Thyroid gland (tissue), 4 donors: ENCODE measurements at regions of chr10 and their contacts with region 1.

Region 1: DNA sequence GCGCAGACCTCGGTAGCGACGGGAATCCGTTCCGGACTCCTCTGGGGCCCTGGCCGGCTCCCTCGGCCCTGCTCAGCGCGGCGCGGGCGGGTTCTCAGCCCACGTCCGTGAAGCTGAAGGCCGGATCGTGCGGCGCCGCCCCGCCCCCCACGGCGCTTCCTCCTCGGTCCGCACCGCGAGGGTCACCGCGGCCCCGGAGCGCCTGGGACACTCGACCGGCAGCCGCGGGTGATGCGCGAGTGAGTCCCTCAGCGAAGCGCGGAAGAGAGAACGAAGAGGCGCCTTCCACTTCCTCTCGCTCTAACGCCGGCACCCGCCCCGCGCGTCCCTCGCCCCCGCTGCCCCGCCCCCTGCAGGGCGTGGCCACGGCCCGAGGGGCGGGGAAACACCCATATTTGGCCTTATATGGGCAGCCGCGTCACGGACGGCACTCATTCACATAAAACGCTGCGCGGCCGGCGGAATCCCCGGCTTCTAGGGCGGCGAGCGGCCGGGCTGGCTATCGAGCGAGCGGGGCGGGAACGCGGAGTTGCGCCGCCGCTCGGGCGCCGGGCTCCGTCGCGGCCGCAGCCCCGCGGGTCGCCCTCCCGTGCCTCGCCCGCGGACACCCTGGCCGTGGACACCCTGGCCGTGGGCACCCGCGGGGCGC is at the start of gene DUSP5:
- DNase-seq: peak; percentile 90 to 94
- H3K4me3 ChIP-seq: peak within 1 kb of the TSS; percentile 79 to 91 (median 85)
- H3K27ac ChIP-seq: peak within 1 kb of the TSS; percentile 76 to 84 (median 84)
- H3K4me1 ChIP-seq: peaks cover 22 to 35% of the 10 kb centered on the region in 2 donors
- H3K27me3 ChIP-seq: no peaks in the 10 kb centered on the region
- CTCF ChIP-seq: peak in 1 of 6 experiments; percentile 3
- POLR2A ChIP-seq: peak; percentile 88 to 99
- total RNA-seq, gene DUSP5: 2.1 to 14.2 (median 7.1) TPM

Region 2: DNA sequence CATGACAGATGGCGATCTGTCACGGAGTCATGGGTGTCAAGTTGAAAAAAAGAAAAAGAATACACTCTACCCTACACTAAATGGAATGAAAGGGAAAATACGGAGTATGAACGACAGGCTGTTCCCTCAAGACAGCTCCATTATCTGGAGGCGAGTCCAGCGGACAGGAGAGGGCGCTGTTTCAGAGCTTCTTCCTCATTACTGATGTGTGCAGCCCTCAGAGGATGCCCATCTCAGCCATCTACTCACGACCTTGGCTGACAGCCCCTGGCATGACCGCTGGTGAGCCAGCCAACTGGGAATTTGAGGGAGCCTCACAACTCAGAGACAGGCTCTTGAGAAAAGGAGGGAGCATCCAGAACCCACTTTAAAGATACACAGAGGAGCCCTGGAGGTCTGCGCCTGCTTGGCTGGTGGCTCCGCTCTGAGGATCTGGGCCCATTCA is 143.2 kb before region 1 on chr10:
- intact Hi-C with region 1: loop called (anchors 5 kb)
- DNase-seq: peak; percentile 82 to 87
- H3K4me3 ChIP-seq: no peak overlapping the region
- H3K27ac ChIP-seq: no peak overlapping the region
- H3K4me1 ChIP-seq: peaks cover 10 to 41% of the 10 kb centered on the region in 2 donors
- H3K27me3 ChIP-seq: no peaks in the 10 kb centered on the region
- CTCF ChIP-seq: peak; percentile 39 to 69 (median 52)
- POLR2A ChIP-seq: no peak

Region 3: GRCh38 chr10:110746254-110746826 is 248.8 kb after region 1 on chr10:
- intact Hi-C with region 1: no loop called
- DNase-seq: peak; percentile 72 to 75
- H3K4me3 ChIP-seq: no peak overlapping the region
- H3K27ac ChIP-seq: no peak overlapping the region
- H3K4me1 ChIP-seq: peaks cover 0 to 12% of the 10 kb centered on the region in 2 donors
- H3K27me3 ChIP-seq: no peaks in the 10 kb centered on the region
- CTCF ChIP-seq: peak; percentile 63 to 88 (median 77)
- POLR2A ChIP-seq: no peak